Prostate gland (tissue), 2 donors: ENCODE measurements at regions of chr22 and their contacts with region 1.

Region 1: DNA sequence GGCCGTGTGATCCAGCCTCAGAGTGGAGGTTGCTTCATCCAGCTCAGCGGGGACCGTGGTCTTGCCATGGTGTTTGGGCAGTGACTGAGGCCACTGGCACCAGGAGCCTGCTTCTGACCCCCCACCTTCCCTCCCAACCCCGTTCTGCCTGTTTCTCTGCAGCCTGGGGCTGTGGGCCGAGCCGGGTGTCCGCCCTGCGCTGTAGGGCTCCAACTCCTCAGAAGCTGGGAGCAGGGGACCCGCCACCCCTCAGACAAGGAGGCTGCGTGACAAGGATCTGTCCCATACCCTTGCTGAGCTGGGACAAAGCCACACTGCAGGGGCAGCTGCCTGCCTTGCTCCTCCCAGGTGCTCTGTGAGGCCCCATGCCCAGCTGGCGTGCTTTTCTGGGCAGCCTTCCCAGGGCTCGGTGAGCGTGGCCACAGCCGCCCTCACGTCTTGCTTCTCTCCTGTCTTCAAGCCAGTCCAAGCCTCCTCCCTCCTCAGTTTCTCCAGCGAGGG is 11.7 kb upstream of the ARFGAP3 start:
- DNase-seq: peak; percentile 90
- H3K4me3 ChIP-seq: no peak overlapping the region
- H3K27ac ChIP-seq: peak overlapping the region; percentile 81 to 89
- H3K4me1 ChIP-seq: peaks cover 8% of the 10 kb centered on the region
- H3K27me3 ChIP-seq: no peaks in the 10 kb centered on the region
- CTCF ChIP-seq: no peak
- POLR2A ChIP-seq: peak; percentile 12

Region 2: GRCh38 chr22:42967933-42968332 is 99.1 kb after region 1 on chr22:
- intact Hi-C with region 1: loop called (anchors 5 kb)
- DNase-seq: no peak
- H3K4me3 ChIP-seq: no peak overlapping the region
- H3K27ac ChIP-seq: no peak overlapping the region
- H3K4me1 ChIP-seq: peaks cover 11% of the 10 kb centered on the region
- H3K27me3 ChIP-seq: no peaks in the 10 kb centered on the region
- CTCF ChIP-seq: peak in 1 of 4 experiments; percentile 20
- POLR2A ChIP-seq: no peak

Region 3: DNA sequence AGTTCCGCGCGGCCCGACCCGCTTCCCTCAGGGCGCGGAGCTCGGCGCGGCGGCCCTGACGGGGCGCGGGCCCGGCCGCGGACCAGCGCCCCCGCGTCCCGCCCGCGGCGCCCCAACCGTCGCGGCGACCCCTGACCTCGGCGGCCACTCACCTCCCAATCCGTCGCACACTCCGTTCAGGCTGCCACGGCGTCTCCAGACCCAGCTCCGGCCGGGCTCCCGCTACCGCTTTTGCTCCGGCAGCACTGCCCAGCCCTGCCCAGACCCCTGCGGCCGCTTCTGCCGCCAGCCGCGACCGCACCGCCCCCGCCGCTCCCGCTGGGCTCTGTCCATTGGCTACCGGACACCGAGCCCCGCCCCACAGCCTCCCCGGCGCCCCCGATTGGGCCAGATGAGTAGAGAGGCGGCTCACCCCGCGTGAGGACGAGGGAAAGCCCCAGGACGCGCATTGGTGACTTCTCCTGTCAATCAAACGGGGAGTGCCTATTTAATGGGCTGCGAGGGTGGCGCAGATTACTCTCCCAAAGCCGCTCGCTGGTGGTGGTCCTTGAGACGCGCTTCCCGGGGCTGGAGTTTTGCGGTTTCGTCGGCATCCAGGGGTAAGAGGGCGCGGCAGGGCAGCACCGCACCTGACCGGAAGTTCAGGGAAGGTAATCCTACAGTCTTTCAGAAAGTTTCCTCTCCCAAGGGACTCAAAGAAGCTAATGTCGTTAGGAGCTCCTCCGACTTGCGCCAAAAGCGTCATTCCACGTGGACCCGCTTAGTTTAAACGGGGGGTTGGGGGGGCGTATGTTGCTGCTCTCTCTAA is 146.3 kb after region 1 on chr22 and contains the start of gene PACSIN2:
- intact Hi-C with region 1: loop called (anchors 5 kb)
- DNase-seq: peak; percentile 100
- H3K4me3 ChIP-seq: peak within 1 kb of the TSS; percentile 90 to 93
- H3K27ac ChIP-seq: peak within 1 kb of the TSS; percentile 87 to 89
- H3K4me1 ChIP-seq: no peaks in the 10 kb centered on the region
- H3K27me3 ChIP-seq: no peaks in the 10 kb centered on the region
- CTCF ChIP-seq: peak in 1 of 4 experiments; percentile 17
- POLR2A ChIP-seq: peak; percentile 96
- total RNA-seq, gene PACSIN2: 78.0 to 87.1 TPM

Region 4: DNA sequence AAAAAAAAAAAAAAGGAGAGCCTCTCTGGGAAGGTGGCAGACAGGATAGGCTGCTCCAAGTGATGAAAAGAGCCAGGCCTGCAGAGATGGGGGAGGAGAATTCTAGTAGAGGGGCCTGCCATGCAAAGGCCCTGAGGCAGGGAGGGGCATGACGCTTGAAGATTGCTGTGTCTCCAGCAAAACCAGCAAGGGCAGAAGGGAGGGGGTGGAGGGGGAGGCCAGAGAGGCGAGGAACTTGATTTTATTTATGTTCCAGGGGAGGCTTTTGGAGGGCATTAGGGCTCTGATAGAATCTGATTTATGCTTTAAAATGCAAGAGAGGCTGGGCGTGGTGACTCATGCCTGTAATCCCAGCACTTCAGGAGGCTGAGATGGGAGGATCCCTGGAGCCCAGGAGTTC is 162.8 kb after region 1 on chr22:
- intact Hi-C with region 1: loop called (anchors 5 kb)
- DNase-seq: no peak
- H3K4me3 ChIP-seq: no peak overlapping the region
- H3K27ac ChIP-seq: no peak overlapping the region
- H3K4me1 ChIP-seq: no peaks in the 10 kb centered on the region
- H3K27me3 ChIP-seq: no peaks in the 10 kb centered on the region
- CTCF ChIP-seq: no peak
- POLR2A ChIP-seq: no peak